ENCODE measurements at regions of chr10 and their contacts with region 1.

Region 1: DNA sequence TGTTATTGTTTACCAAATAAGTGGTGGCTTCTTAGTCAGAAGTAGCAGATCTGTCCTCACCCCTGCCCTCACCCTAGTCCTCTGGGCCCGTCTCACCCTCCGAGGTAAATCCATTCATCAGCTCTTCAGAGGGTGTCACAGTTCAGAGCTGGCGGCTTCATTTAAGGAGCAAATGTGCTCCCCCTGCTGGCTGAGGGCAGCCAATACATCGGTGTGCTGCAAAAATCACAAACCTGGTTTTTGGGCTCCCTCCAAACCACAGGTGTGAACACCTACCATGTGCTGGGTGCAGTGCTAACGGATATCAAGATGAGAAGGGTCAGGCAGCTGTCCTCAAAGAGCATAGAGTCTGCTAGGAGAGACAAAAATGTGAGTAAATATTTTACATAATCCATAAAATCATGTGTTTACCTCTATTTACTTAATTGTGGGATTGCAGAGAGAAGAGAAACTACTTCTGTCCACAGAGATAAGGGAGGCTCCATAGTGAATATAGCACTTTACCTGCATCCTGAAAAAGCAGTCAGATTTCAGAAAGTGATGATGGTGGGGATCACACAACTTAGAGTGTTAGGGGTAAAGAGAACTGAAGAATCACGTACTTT is 15.5 kb upstream of the CRTAC1 start:
- DNase-seq: peak; percentile 63
- H3K4me3 ChIP-seq: no peak overlapping the region
- H3K27ac ChIP-seq: no peak overlapping the region
- H3K4me1 ChIP-seq: no peaks in the 10 kb centered on the region
- H3K27me3 ChIP-seq: peaks cover 0 to 15% (median 1%) of the 10 kb centered on the region in 3 donors
- CTCF ChIP-seq: peak; percentile 5 to 84 (median 70)
- EP300 ChIP-seq: no peak
- POLR2A ChIP-seq: no peak

Region 2: DNA sequence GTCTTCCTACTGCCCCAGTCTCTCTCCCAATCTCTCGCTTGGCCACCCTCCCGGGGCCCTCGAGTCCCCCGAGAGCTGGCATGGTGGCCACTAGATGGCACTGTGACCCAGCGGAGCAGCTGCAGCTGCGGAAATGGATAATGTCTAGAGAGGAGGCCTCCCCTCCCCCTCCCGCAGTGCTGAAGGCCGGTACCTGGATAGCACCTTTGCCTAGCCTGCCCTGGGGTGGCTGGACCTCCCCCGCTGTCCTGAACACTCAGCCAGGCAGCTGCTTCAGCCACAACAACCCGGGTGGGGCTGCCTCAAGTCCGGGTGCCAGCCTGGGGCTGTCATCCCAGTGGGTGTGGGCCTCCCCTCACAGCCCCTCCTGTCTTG is 131.1 kb before region 1 on chr10:
- intact Hi-C with region 1: loop called (anchors 2 kb)
- DNase-seq: peak; percentile 79
- H3K4me3 ChIP-seq: no peak overlapping the region
- H3K27ac ChIP-seq: no peak overlapping the region
- H3K4me1 ChIP-seq: peaks cover 0 to 9% (median 7%) of the 10 kb centered on the region in 4 donors
- H3K27me3 ChIP-seq: peaks cover 0 to 14% (median 4%) of the 10 kb centered on the region in 3 donors
- CTCF ChIP-seq: peak; percentile 54 to 90 (median 74)
- EP300 ChIP-seq: no peak
- POLR2A ChIP-seq: no peak

Region 3: DNA sequence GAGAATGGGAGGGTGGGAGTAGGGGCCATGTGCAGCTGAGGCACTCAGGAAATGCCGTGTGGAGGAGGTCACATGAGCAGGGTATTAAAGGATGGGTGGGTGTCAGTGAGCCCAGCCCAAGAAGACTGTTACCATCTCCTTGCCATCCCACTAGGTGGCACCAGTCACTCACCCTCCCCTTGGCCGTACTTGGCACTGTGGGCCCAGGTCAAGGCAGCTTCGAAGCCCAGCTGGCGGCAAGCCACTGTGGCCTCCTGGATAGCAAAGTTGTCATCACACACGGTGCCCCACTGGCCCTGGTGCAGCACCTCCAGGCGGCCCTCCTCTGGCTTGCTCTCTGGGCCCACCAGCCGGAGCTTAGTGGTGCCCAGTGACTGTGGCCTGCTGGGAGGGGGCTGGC is 216.7 kb after region 1 on chr10:
- intact Hi-C with region 1: no loop called
- DNase-seq: no peak
- H3K4me3 ChIP-seq: no peak overlapping the region
- H3K27ac ChIP-seq: no peak overlapping the region
- H3K4me1 ChIP-seq: peaks cover 0 to 57% (median 36%) of the 10 kb centered on the region in 4 donors
- H3K27me3 ChIP-seq: no peaks in the 10 kb centered on the region
- CTCF ChIP-seq: peak in 3 of 4 experiments; percentile 16 to 28 (median 19)
- EP300 ChIP-seq: no peak
- POLR2A ChIP-seq: no peak

Region 4: DNA sequence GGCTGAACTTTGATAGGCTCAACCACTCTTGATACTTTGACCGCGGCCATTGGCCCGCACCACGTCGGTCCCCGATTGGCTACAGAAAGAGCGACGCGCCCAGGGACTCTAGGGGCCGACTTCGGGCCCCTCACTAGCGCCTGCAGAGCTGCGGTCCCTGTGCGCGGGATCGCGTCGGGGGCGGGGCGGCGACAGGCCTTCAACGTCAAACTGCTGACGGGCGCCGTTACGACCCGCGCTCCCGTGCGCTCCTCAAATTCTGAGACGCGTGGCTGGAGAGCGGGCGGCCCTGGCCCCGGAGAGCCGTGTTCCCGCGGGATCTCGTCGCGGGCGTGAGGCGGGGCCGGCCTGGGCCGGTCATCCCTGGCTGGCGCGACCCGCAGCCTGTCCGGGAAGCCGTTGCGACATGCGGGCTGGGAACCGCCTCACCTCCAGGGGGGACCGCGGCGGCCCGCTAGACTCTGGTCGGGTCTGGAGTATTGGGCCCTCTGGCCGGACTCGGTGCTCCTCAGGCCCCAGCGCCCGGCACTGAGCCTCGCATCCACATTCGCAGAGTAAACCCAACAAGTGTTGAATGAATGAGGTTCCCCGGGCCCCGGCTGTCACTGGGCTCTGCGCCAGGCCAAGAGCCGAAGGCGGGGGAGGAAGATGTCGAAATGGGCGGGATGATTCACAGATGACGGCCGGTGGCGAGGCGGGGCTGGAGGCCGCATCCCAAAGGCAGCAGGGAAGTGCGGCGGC is 1575.0 kb after region 1 on chr10:
- intact Hi-C with region 1: no loop called
- DNase-seq: peak; percentile 98
- H3K4me3 ChIP-seq: peak overlapping the region; percentile 49 to 92 (median 84)
- H3K27ac ChIP-seq: peak overlapping the region; percentile 93 to 97 (median 96)
- H3K4me1 ChIP-seq: peaks cover 0 to 49% (median 42%) of the 10 kb centered on the region in 4 donors
- H3K27me3 ChIP-seq: no peaks in the 10 kb centered on the region
- CTCF ChIP-seq: no peak
- EP300 ChIP-seq: peak in 1 of 4 donors; percentile 66
- POLR2A ChIP-seq: peak; percentile 76 to 77